ENCODE measurements at regions of chr17 and their contacts with region 1.

Region 1: GRCh38 chr17:78497115-78497540 is 80.1 kb downstream of the DNAH17 start:
- DNase-seq: peak in 1 of 2 donors; percentile 75
- ATAC-seq: peak in 2 of 3 donors; percentile 64 to 65
- H3K4me3 ChIP-seq: no peak overlapping the region
- H3K4me3 Mint-ChIP-seq: no peak overlapping the region
- H3K27ac ChIP-seq: no peak overlapping the region
- H3K27ac Mint-ChIP-seq: no peak overlapping the region
- H3K4me1 ChIP-seq: no peaks in the 10 kb centered on the region
- H3K4me1 Mint-ChIP-seq: no peaks in the 10 kb centered on the region
- H3K27me3 ChIP-seq: no peaks in the 10 kb centered on the region
- H3K27me3 Mint-ChIP-seq: no peaks in the 10 kb centered on the region
- CTCF ChIP-seq: peak; percentile 34

Region 2: DNA sequence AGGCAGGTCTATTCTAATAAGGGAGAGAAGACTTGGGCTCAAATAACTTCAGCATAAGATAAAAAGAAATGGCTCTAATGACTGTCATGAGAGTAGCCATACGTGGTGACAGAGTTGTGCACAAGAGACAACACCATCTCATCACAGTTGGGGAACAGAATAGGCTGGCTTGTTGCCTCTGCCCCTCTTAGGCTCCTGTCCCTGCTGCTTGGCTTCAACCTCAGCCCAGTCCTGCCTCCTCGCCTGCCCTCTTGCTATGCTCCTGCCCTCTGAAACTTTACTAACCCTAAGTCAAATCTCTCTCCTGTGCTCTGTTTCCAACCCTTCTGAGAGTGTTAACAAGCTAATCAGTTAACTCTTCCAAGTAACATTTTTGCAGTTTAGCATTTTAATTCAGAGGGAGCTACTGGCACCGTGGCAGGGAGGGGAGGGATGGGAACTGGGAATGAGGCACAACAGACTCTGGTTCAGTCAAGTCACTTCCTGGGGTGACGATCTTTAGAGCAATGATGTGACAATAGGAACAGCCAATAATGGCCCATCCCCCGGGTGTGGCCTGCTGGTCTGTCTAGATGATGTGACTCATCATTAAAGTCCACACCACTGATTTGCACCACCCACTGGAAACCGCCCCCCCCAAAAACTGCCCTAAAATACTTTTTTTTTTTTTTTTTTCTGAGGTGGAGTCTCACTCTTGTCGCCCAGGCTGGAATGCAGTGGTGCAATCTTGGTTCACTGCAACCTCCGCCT is 44.5 kb after region 1 on chr17:
- intact Hi-C with region 1: no loop called
- DNase-seq: no peak
- ATAC-seq: peak in 1 of 3 donors; percentile 41
- H3K4me3 ChIP-seq: no peak overlapping the region
- H3K4me3 Mint-ChIP-seq: no peak overlapping the region
- H3K27ac ChIP-seq: no peak overlapping the region
- H3K27ac Mint-ChIP-seq: no peak overlapping the region
- H3K4me1 ChIP-seq: no peaks in the 10 kb centered on the region
- H3K4me1 Mint-ChIP-seq: no peaks in the 10 kb centered on the region
- H3K27me3 ChIP-seq: no peaks in the 10 kb centered on the region
- H3K27me3 Mint-ChIP-seq: peaks cover 0 to 4% of the 10 kb centered on the region in 2 donors
- CTCF ChIP-seq: no peak

Region 3: DNA sequence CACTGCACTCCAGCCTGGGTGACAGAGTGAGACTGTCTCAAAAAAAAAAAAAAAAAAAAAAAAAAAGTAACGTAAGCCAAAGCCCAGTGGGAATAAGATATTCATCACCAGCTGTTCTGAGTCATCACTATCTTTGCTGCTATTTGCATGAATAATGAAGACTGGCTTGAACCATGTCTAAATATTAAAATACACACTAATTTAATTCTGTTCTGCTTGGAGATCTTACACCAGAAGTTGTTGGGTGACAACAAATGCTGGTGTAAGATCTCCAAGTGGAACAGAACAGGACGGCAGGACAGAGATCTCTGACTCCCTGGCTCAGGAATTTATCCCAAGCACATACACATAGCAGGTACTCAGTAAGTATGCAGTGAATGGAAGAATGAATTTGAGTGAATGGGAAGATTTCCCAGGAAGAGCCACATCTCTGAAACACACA is 60.5 kb after region 1 on chr17:
- intact Hi-C with region 1: no loop called
- DNase-seq: no peak
- ATAC-seq: no peak
- H3K4me3 ChIP-seq: no peak overlapping the region
- H3K4me3 Mint-ChIP-seq: no peak overlapping the region
- H3K27ac ChIP-seq: no peak overlapping the region
- H3K27ac Mint-ChIP-seq: no peak overlapping the region
- H3K4me1 ChIP-seq: no peaks in the 10 kb centered on the region
- H3K4me1 Mint-ChIP-seq: no peaks in the 10 kb centered on the region
- H3K27me3 ChIP-seq: no peaks in the 10 kb centered on the region
- H3K27me3 Mint-ChIP-seq: no peaks in the 10 kb centered on the region
- CTCF ChIP-seq: no peak

Region 4: GRCh38 chr17:78798695-78799559 is 301.8 kb after region 1 on chr17:
- intact Hi-C with region 1: loop called (anchors 1 kb)
- DNase-seq: peak in 1 of 2 donors; percentile 70
- ATAC-seq: peak; percentile 61 to 63 (median 62)
- H3K4me3 ChIP-seq: no peak overlapping the region
- H3K4me3 Mint-ChIP-seq: peak overlapping the region; percentile 88
- H3K27ac ChIP-seq: no peak overlapping the region
- H3K27ac Mint-ChIP-seq: peak overlapping the region; percentile 79 to 86
- H3K4me1 ChIP-seq: peaks cover 43% of the 10 kb centered on the region
- H3K4me1 Mint-ChIP-seq: peaks cover 42 to 58% of the 10 kb centered on the region in 2 donors
- H3K27me3 ChIP-seq: no peaks in the 10 kb centered on the region
- H3K27me3 Mint-ChIP-seq: no peaks in the 10 kb centered on the region
- CTCF ChIP-seq: peak; percentile 59

Region 5: GRCh38 chr17:78970834-78971773 is 474.0 kb after region 1 on chr17:
- intact Hi-C with region 1: loop called (anchors 1 kb)
- DNase-seq: peak; percentile 69 to 89
- ATAC-seq: peak; percentile 73 to 83 (median 81)
- H3K4me3 ChIP-seq: no peak overlapping the region
- H3K4me3 Mint-ChIP-seq: no peak overlapping the region
- H3K27ac ChIP-seq: no peak overlapping the region
- H3K27ac Mint-ChIP-seq: peak overlapping the region in 1 of 2 donors; percentile 30
- H3K4me1 ChIP-seq: peaks cover 7% of the 10 kb centered on the region
- H3K4me1 Mint-ChIP-seq: peaks cover 6 to 7% of the 10 kb centered on the region in 2 donors
- H3K27me3 ChIP-seq: no peaks in the 10 kb centered on the region
- H3K27me3 Mint-ChIP-seq: no peaks in the 10 kb centered on the region
- CTCF ChIP-seq: peak; percentile 87

Measured in natural killer cell (primary cell).